Calu3 (cell line): ENCODE measurements at regions of chr2 and their contacts with region 1.

Region 1: DNA sequence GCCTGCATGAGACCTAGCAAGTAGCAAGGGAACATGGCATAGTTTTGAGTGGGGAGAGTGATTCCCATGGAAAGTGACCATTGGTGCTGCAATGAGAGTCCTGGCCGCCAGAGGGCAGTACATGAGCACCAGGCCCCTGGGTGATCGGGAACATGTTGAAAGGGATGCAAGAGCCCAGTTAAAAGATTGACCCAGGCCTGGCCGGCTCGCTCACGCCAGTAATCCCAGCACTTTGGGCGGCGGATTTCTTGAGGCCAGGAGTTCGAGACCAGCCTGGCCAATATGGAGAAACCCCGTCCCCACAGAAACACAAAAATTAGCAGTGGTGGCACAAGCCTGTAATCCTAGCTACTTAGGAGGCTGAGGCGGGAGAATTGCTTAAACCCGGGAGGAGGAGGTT is 22.2 kb downstream of the FAP start:
- DNase-seq: peak; percentile 73
- H3K4me3 Mint-ChIP-seq: no peak overlapping the region
- H3K27ac Mint-ChIP-seq: no peak overlapping the region
- H3K4me1 Mint-ChIP-seq: no peaks in the 10 kb centered on the region
- H3K27me3 Mint-ChIP-seq: no peaks in the 10 kb centered on the region
- CTCF ChIP-seq: peak; percentile 87

Region 2: DNA sequence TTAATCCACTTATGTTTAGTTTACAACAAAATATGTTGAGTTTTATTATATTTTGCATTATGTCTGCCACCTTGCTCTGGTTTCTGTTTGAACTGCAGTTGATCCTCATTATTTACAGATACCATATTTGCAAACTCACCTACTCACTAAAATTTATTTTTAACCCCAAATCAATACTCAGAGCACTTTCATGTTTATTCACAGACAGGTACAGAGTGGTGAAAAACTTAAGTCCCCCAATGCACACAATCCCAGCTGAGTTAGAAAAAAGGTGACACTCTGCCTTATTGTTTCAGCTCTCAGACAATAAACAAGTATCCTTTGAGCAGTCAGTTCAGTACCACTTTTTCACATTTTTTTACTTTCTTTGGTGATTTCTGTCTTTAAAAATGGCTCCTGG is 82.8 kb before region 1 on chr2:
- CTCF ChIA-PET with region 1: no interaction called
- intact Hi-C with region 1: no loop called
- DNase-seq: no peak
- H3K4me3 Mint-ChIP-seq: no peak overlapping the region
- H3K27ac Mint-ChIP-seq: no peak overlapping the region
- H3K4me1 Mint-ChIP-seq: peaks cover 7% of the 10 kb centered on the region
- H3K27me3 Mint-ChIP-seq: no peaks in the 10 kb centered on the region
- CTCF ChIP-seq: no peak

Region 3: DNA sequence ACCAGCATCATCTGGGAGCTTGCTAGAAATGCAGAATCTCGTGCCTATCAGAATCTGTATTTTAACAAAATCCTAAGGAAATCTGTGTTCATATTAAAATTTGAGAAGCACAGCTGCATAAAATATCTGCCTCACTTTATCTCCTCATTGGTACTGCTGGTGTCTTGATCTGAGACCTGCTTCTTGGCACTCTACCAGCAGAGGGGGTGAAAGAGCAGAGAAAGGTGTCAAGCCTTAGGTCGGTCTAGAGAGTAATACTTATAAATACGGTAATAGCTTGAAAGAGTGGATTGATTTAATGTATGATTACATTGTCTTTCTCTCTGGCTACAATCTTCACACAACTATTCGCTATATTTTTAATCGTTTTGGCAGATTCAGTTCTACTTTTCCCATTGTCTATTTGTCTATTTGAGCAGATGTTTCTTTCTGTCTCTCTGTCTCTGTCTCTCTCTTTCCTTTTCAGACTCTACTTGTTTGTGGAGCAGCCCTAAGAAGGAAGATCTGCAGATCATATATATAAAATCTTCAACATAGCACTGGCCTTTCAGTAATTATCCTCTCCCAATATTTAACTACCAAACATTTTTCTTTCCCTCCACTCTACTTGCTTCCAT is 67.3 kb before region 1 on chr2:
- CTCF ChIA-PET with region 1: no interaction called
- intact Hi-C with region 1: loop called (anchors 1 kb)
- DNase-seq: peak; percentile 77
- H3K4me3 Mint-ChIP-seq: peak overlapping the region; percentile 29
- H3K27ac Mint-ChIP-seq: no peak overlapping the region
- H3K4me1 Mint-ChIP-seq: peaks cover 9% of the 10 kb centered on the region
- H3K27me3 Mint-ChIP-seq: no peaks in the 10 kb centered on the region
- CTCF ChIP-seq: peak; percentile 77

Region 4: GRCh38 chr2:162174746-162175145 is 46.3 kb before region 1 on chr2:
- CTCF ChIA-PET with region 1: no interaction called
- intact Hi-C with region 1: no loop called
- DNase-seq: no peak
- H3K4me3 Mint-ChIP-seq: no peak overlapping the region
- H3K27ac Mint-ChIP-seq: no peak overlapping the region
- H3K4me1 Mint-ChIP-seq: no peaks in the 10 kb centered on the region
- H3K27me3 Mint-ChIP-seq: no peaks in the 10 kb centered on the region
- CTCF ChIP-seq: no peak

Region 5: DNA sequence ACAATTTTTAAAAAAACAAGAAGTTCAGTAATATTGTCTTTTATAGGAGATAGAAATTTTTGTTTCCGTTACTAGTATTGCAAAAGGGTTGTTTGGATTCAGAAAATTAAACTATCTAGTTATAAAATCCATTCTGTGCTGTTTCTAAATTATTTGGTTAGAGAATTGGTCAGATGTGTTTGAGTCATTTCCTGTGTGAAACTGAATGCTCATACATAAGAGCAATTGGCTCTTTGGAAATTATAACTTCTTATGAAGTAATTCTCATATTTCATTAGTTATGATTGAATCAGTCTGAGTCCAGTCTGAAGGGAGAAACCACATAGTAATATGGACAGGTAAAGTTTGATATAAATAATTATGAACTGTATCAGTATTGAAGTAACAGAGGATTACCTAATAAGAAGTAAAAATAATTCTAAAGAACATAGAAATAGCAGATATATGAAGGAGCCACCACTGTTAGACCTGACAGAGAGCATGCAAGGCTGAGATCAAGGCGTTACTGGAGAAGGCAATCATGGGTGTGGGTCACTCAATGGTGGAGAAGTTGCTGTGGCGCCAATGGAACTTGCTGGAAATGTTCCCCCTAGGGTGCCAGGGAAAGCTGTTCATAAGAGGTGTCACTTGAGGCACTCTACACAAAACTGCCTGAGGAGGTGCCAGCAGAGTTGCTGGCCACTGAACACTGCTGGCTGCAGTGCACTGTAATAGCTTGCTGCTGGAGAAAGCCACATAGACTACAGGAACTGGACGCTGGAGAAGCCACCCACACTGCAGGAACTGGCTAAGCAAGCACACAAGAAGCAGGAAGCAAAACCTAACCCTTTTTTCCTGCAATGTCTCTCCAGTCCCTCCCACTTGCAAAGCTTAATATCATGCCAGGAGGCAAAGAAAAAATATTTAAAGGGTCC is 40.2 kb after region 1 on chr2:
- CTCF ChIA-PET with region 1: interaction called, 3 read pairs
- intact Hi-C with region 1: loop called (anchors 5 kb)
- DNase-seq: peak; percentile 38
- H3K4me3 Mint-ChIP-seq: no peak overlapping the region
- H3K27ac Mint-ChIP-seq: peak overlapping the region; percentile 29
- H3K4me1 Mint-ChIP-seq: peaks cover 12% of the 10 kb centered on the region
- H3K27me3 Mint-ChIP-seq: no peaks in the 10 kb centered on the region
- CTCF ChIP-seq: no peak

Region 6: DNA sequence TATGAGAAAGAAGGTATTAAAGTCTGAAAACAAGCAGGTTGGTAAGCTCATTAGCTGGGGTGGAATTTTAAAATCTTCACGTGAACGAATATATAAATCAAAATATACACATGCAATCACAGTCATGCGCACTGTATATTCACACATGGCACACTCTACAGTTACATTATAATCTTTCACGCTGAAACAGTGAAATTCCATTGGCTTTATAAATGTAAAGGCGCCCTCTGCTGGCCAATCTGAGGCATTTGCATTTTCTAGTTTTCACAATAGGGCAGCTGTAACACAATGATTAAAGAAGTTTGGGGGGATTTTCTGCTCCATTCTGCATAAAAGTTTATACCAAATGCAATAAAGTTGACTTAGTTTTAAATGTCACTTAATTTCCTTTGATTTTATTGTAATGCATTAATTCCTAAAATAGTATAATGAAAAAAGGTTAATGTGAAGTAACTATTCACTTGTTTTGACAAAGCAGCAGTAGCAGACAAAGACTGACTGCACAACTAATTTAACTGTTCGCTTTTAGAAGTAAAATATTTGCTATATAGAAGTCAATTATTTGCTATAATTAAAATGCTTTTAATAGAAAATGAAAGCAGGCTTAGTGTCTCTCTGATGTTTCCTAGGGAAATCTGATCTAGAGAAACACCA is 80.2 kb after region 1 on chr2:
- CTCF ChIA-PET with region 1: interaction called, 41 read pairs
- intact Hi-C with region 1: loop called (anchors 1 kb)
- DNase-seq: peak; percentile 42
- H3K4me3 Mint-ChIP-seq: no peak overlapping the region
- H3K27ac Mint-ChIP-seq: no peak overlapping the region
- H3K4me1 Mint-ChIP-seq: no peaks in the 10 kb centered on the region
- H3K27me3 Mint-ChIP-seq: no peaks in the 10 kb centered on the region
- CTCF ChIP-seq: peak; percentile 74